Psoas muscle (tissue), 8 donors: ENCODE measurements at regions of chr5 and their contacts with region 1.

Region 1: GRCh38 chr5:36944607-36945225 is 68.1 kb downstream of the NIPBL start:
- DNase-seq: no peak
- ATAC-seq: peak in 1 of 4 donors; percentile 43
- H3K4me3 ChIP-seq: no peak overlapping the region
- H3K27ac ChIP-seq: no peak overlapping the region
- H3K4me1 ChIP-seq: peaks cover 67% of the 10 kb centered on the region
- H3K27me3 ChIP-seq: no peaks in the 10 kb centered on the region
- CTCF ChIP-seq: peak; percentile 61

Region 2: DNA sequence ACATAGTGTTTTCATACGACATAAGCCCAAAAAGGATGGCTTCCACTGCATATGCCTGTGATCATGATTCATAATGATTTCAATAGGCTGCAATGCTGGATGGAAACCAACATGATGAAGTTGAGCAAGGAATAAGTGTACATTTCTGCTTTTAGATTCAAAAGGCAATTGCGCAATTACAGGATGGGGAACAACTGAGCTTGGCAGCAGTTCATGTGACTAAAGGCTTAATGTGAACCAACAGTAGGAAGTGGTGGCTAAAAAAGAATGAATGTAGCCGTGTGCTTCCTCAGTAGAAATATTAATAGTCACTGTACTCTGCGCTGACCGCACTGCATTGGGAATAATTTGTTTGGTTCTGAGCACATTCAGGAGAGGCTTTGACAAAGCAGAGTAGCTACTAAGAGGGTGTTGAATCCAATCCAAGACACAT is 287.1 kb before region 1 on chr5:
- intact Hi-C with region 1: no loop called
- DNase-seq: peak in 1 of 2 donors; percentile 48
- ATAC-seq: peak; percentile 80 to 92 (median 91)
- H3K4me3 ChIP-seq: peak overlapping the region; percentile 37
- H3K27ac ChIP-seq: peak overlapping the region; percentile 87
- H3K4me1 ChIP-seq: peaks cover 57% of the 10 kb centered on the region
- H3K27me3 ChIP-seq: no peaks in the 10 kb centered on the region
- CTCF ChIP-seq: no peak

Region 3: GRCh38 chr5:36734422-36734821 is 210.3 kb before region 1 on chr5:
- intact Hi-C with region 1: loop called in 1 of 2 experiments (anchors 5 kb)
- DNase-seq: no peak
- ATAC-seq: peak in 2 of 4 donors; percentile 46 to 58
- H3K4me3 ChIP-seq: no peak overlapping the region
- H3K27ac ChIP-seq: no peak overlapping the region
- H3K4me1 ChIP-seq: no peaks in the 10 kb centered on the region
- H3K27me3 ChIP-seq: peaks cover 0 to 3% (median 0%) of the 10 kb centered on the region in 3 donors
- CTCF ChIP-seq: peak; percentile 7

Region 4: DNA sequence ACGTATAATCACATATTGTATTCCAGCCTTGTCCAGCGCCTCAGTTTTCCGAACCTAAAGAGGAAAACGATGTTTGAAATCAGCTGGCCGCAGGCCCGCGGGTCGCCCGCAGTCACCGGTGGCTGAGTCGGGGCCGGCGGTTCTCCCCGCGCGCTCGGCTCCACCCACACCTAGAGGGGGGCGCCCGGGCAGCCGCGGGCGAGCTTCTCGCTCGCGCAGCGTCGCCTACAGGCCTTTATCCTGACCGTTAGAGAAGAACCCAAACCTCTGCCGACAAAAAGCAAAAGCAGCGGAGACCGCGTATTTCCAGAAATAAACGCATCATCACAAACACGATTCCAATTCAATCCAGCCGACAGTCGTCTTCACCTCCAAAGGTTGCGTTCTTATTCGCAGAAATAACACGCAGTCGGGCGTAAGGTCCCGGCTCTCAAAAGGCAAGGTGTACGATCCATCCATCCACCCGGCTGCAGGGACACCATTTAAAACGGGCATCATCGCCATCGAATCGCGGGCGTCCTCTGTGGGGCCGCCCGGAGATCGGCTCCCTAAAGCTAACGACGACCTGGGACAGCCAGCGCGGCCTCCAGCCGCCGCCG is 68.8 kb before region 1 on chr5:
- intact Hi-C with region 1: loop called (anchors 2 to 5 kb)
- DNase-seq: peak; percentile 81 to 89
- ATAC-seq: peak; percentile 82 to 85 (median 84)
- H3K4me3 ChIP-seq: peak overlapping the region; percentile 86
- H3K27ac ChIP-seq: peak overlapping the region; percentile 96
- H3K4me1 ChIP-seq: peaks cover 38% of the 10 kb centered on the region
- H3K27me3 ChIP-seq: no peaks in the 10 kb centered on the region
- CTCF ChIP-seq: peak; percentile 53